ENCODE measurements at regions of chr16 and their contacts with region 1.

Region 1: GRCh38 chr16:46607529-46607928 is 13.7 kb downstream of the SHCBP1 start:
- DNase-seq: peak; percentile 26
- H3K4me3 ChIP-seq: no peak overlapping the region
- CTCF ChIP-seq: peak; percentile 22

Region 2: DNA sequence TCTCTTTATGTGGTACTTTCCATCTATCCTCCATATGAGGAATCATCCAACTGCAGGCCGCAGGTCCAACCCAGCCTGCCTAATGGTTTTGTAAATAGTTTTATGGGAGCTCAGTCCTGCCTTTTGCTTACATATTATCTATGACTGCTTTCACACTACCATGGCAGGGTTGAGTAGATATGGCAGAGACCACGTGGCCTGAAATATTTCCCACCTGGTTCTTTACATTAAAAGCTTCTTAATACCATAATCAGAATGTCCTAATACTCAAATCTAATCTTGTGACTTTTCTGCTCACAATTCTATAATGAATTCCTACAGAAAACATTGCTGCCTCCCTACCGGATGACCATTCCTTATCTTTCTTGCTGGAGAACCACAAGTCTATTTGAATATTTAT is 58.1 kb before region 1 on chr16:
- CTCF ChIA-PET with region 1: interaction called, 291 read pairs
- POLR2A ChIA-PET with region 1: no interaction called
- DNase-seq: no peak
- H3K4me3 ChIP-seq: no peak overlapping the region
- CTCF ChIP-seq: no peak

Region 3: GRCh38 chr16:46555951-46556350 is 51.6 kb before region 1 on chr16:
- CTCF ChIA-PET with region 1: interaction called, 291 read pairs
- POLR2A ChIA-PET with region 1: no interaction called
- DNase-seq: no peak
- H3K4me3 ChIP-seq: no peak overlapping the region
- CTCF ChIP-seq: no peak

Region 4: GRCh38 chr16:46573008-46573833 is 34.3 kb before region 1 on chr16:
- CTCF ChIA-PET with region 1: interaction called, 23 read pairs
- POLR2A ChIA-PET with region 1: no interaction called
- DNase-seq: no peak
- H3K4me3 ChIP-seq: no peak overlapping the region
- CTCF ChIP-seq: no peak

Region 5: GRCh38 chr16:46591257-46591656 is 16.3 kb before region 1 on chr16:
- CTCF ChIA-PET with region 1: interaction called, 26 read pairs
- POLR2A ChIA-PET with region 1: no interaction called
- DNase-seq: no peak
- H3K4me3 ChIP-seq: no peak overlapping the region
- CTCF ChIP-seq: no peak

Region 6: GRCh38 chr16:46621006-46621933 is 13.7 kb after region 1 on chr16 and contains the start of gene SHCBP1:
- CTCF ChIA-PET with region 1: interaction called, 12 read pairs
- POLR2A ChIA-PET with region 1: no interaction called
- DNase-seq: no peak
- H3K4me3 ChIP-seq: peak within 1 kb of the TSS; percentile 79
- CTCF ChIP-seq: no peak

Region 7: GRCh38 chr16:46629331-46630219 is 22.0 kb after region 1 on chr16:
- CTCF ChIA-PET with region 1: interaction called, 11 read pairs
- POLR2A ChIA-PET with region 1: no interaction called
- DNase-seq: no peak
- H3K4me3 ChIP-seq: no peak overlapping the region
- CTCF ChIP-seq: peak; percentile 33

Region 8: DNA sequence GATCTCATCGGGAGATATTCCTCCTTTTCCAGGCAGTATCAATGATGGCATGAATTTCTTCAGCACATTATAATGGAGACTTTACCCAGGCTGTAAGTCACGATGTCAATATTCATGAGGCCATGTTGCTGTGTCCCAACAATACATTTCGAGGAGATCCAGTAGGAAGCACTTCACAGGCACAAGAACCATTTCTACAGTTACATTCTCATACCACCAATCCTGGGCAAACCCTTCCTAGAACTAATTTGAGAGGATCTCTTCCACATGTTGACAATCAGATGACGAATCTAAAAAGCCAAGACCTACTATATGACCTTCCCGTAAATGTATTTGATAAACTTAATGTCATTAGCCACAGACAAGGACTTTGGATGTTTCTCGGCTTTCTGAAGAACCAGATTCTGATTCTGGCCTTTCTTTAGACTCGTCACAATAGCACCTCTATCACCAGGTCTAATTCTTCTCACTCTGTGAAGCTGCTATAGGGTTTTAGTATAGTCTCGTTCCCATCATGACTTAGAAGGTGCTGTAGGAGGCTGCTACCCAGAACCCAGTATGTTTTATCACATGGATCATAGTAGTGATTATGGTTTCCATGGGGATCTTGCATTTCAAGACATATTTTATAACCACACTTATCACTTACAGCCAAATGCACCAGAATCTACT is 183.2 kb after region 1 on chr16:
- CTCF ChIA-PET with region 1: no interaction called
- POLR2A ChIA-PET with region 1: no interaction called
- DNase-seq: no peak
- H3K4me3 ChIP-seq: peak overlapping the region; percentile 65
- CTCF ChIP-seq: no peak

Region 9: GRCh38 chr16:46801428-46802049 is 194.0 kb after region 1 on chr16:
- CTCF ChIA-PET with region 1: no interaction called
- POLR2A ChIA-PET with region 1: no interaction called
- DNase-seq: no peak
- H3K4me3 ChIP-seq: no peak overlapping the region
- CTCF ChIP-seq: peak; percentile 25

Region 10: DNA sequence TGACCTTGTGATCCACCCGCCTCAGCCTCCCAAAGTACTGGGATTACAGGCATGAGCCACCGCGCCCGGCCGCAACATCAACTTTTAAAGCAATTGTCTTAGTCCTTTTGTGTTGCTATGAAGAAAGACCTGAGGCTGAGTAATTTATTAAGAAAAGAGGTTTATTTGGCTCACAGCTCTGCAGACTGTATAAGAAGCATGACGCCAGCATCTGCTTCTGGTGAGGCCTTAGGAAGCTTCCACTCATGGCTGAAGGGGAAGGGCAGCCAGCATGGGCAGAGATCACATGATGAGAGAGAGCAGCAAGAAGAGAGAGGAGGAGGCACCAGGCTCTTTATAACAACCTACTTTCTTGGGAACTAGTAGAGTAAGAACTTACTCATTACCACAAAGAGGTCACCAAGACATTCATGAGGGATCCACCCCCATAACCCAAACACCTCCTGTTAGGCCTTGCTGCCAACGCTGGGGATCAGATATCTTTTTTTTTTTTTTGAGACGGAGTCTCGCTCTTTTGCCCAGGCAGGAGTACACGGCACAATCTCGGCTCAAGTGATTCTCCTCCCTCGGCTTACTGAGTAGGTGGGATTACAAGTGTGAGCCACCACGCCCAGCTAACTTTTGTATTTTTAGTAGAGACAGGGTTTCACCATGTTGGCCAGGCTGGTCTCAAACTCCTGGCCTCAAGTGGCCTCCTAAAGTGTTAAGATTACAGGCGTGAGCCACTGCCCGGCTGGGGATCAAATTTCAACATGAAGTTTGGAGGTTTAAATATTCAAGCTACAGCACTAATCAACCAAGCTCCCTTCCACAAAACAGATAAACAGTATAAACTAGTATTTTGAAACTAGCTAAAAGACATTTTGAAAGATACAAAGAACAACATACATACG is 255.3 kb after region 1 on chr16:
- CTCF ChIA-PET with region 1: no interaction called
- POLR2A ChIA-PET with region 1: no interaction called
- DNase-seq: no peak
- H3K4me3 ChIP-seq: no peak overlapping the region
- CTCF ChIP-seq: no peak